PC-9 (cell line): ENCODE measurements at regions of chr10 and their contacts with region 1.

Region 1: GRCh38 chr10:24724381-24725228 is 918 bp upstream of the ARHGAP21 start:
- DNase-seq: peak; percentile 83 to 96
- H3K4me3 ChIP-seq: peak overlapping the region; percentile 95
- H3K27ac ChIP-seq: peak overlapping the region; percentile 53
- H3K4me1 ChIP-seq: peaks cover 14% of the 10 kb centered on the region
- H3K27me3 ChIP-seq: no peaks in the 10 kb centered on the region
- CTCF ChIP-seq: no peak; the same call in 1 of the 2 replicates

Region 2: DNA sequence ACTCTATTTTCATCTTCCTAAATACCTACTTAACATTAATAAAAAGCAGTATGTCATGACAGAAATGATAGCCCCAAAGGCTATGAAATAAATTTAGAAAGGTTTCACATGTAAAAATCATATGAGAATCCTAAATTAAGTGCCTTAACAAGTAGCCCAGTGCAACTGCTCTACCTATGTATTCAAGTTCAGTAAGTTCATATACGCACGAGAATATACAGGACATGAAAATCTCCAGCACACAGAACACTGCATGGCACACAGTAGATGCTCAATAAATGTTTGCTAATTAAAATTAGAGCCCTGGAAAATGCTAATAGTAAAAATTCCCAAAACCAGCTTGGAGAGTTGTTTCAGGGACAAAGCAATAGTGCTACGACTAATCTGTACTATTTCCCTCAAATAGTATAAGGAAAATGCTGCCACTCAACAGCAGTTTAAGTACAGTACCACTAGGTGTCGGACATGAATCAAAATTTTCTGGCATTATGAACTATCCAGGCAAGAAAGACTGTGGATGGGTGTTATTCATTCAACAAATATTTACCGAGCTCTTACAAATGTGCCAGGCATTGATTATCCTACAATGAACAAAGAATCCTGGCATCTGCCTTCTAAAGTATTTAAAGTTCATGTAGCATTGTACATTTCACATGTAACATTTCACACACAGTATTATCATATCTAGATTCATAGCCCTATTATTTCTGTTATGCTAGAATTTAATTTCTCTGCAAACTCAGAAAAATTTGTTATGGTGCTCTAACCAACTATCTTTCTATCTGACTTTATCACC is 81.8 kb before region 1 on chr10:
- CTCF ChIA-PET with region 1: interaction called, 7 read pairs
- POLR2A ChIA-PET with region 1: no interaction called
- intact Hi-C with region 1: loop called (anchors 5 kb)
- DNase-seq: peak; percentile 20 to 80
- H3K4me3 ChIP-seq: no peak overlapping the region
- H3K27ac ChIP-seq: peak overlapping the region; percentile 29; the same call in 1 of the 2 replicates
- H3K4me1 ChIP-seq: peaks cover 36% of the 10 kb centered on the region
- H3K27me3 ChIP-seq: no peaks in the 10 kb centered on the region
- CTCF ChIP-seq: peak; percentile 80

Region 3: DNA sequence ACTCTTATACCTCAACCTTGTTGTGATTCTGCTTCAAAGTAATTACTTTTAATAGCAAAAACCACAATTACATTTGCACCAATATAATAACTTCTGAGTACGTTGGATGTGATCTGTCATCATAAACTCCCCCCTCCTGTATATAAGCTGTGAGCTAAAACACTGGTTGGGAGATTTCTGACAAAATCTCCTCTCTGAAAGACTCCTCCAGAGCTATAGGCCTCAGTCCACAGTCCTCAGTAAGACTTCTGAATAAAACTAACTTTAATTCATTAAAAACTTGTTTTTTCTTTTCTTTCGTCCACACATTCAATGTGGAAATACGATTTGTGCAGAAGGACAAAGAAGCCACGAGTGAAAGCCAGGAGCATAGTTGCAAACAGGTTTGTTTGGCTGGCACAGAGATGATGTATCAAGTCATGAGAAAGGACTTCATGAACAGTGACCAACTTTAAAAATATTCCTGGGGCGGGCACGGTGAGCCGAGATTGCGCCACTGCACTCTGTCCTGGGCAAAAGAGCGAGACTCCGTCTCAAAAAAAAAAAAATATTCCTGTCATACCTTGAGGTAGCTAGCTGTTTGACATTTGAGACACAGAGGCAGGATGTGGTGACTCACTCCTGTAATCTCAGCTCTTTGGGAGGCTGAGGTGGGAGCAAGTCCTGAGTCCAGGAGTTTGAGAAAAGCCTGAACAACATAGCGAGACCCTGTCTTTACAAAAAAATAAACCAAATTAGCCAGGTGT is 90.1 kb after region 1 on chr10:
- CTCF ChIA-PET with region 1: no interaction called
- POLR2A ChIA-PET with region 1: interaction called, 4 read pairs
- intact Hi-C with region 1: loop called (anchors 2 kb)
- DNase-seq: peak; percentile 85 to 90
- H3K4me3 ChIP-seq: no peak overlapping the region; the same call in 1 of the 2 replicates
- H3K27ac ChIP-seq: peak overlapping the region; percentile 86
- H3K4me1 ChIP-seq: peaks cover 17% of the 10 kb centered on the region
- H3K27me3 ChIP-seq: no peaks in the 10 kb centered on the region
- CTCF ChIP-seq: no peak

Region 4: DNA sequence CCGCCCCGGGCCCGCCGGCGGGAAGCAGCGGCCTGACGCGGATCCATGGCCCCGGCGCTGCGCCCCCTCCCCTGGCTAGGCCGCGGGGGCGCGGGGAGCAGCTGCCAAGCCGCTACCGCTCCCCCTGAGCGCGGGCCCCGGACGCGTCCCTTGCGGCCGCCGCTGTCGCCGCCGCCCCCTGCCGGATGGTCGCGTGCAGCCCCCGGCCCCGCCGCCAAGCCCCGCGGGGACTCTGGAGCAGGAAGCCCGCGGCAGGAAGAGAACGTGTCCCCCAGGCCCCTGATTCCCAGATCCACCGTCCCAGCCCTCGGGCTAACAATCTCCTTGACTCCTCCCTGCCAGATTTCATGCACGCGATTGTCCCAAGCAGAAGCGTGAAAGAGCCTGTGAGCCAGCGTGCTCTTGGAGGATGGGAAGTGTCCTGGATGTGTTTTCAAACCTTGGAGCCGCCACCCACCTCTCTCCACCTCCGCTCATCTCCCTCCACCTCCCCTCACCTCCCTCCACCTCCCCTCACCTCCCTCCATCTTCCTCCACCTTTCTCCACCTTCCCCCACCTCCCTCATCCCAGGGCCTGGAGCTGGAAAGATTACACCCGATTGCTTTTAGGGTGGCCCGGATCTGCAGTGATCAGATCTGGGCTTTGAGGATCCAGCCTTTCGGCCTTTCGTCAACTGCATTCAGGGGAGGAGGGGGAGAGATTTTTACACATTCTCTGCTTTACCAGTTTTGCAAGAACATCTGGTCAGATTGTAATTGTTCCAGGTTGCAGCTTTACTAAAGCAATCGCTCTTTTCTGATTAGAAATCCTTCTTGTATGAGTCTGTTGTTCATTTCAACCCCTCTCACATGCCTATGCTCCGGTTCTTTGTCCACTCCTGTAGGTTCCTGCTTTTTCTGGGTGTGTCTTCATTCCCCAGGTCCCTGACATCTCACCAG is 228.4 kb after region 1 on chr10:
- CTCF ChIA-PET with region 1: no interaction called
- POLR2A ChIA-PET with region 1: interaction called, 3 read pairs
- intact Hi-C with region 1: loop called (anchors 2 kb)
- DNase-seq: peak; percentile 39
- H3K4me3 ChIP-seq: peak overlapping the region; percentile 52
- H3K27ac ChIP-seq: 0 out of 2 replicates have a peak overlapping the region, but pooled peaks have one; percentile 20
- H3K4me1 ChIP-seq: peaks cover 26% of the 10 kb centered on the region
- H3K27me3 ChIP-seq: no peaks in the 10 kb centered on the region
- CTCF ChIP-seq: no peak; the same call in 1 of the 2 replicates

Region 5: DNA sequence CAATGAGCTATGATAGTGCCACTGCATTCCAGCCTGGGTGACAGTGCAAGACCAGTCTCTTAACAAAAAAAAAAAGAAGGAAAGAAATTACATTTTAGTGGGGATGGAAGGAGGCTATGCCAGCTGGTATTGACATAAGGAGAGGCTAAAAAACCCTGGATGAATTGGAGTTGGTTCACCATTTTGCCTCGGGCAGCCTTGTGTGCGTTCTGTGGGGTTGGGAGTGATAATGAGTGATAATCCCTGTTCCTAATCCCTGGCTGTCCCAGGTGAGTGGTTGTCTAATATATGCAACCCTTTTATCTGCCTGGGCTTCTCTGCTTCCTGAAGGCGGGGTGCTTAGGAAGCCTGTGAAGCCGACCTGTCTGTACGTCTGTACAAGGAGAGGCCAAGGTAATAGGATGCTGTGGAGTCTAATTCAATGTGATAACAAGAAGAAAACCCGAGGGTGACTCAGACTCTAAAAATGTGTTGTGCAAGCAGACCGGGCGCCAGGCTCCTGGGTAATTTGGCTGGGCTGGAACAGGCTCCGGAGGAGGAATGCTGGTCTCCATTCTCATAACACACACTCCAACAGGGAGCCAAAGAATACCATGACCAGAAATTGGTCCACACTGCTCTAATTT is 335.3 kb after region 1 on chr10:
- CTCF ChIA-PET with region 1: no interaction called
- POLR2A ChIA-PET with region 1: no interaction called
- intact Hi-C with region 1: loop called (anchors 5 kb)
- DNase-seq: peak; percentile 84 to 88
- H3K4me3 ChIP-seq: no peak overlapping the region; the same call in 1 of the 2 replicates
- H3K27ac ChIP-seq: peak overlapping the region; percentile 89
- H3K4me1 ChIP-seq: peaks cover 42% of the 10 kb centered on the region
- H3K27me3 ChIP-seq: no peaks in the 10 kb centered on the region
- CTCF ChIP-seq: no peak